ENCODE measurements at regions of chr1 and their contacts with region 1.

Region 1: GRCh38 chr1:47437447-47438164 is at the start of gene FOXD2:
- DNase-seq: peak; percentile 85
- H3K4me3 Mint-ChIP-seq: peak within 1 kb of the TSS; percentile 93
- H3K27ac Mint-ChIP-seq: peak within 1 kb of the TSS; percentile 91
- H3K4me1 Mint-ChIP-seq: peaks cover 34% of the 10 kb centered on the region
- H3K27me3 Mint-ChIP-seq: peaks cover 27% of the 10 kb centered on the region
- total RNA-seq, gene FOXD2: 0.15 to 0.20 TPM

Region 2: DNA sequence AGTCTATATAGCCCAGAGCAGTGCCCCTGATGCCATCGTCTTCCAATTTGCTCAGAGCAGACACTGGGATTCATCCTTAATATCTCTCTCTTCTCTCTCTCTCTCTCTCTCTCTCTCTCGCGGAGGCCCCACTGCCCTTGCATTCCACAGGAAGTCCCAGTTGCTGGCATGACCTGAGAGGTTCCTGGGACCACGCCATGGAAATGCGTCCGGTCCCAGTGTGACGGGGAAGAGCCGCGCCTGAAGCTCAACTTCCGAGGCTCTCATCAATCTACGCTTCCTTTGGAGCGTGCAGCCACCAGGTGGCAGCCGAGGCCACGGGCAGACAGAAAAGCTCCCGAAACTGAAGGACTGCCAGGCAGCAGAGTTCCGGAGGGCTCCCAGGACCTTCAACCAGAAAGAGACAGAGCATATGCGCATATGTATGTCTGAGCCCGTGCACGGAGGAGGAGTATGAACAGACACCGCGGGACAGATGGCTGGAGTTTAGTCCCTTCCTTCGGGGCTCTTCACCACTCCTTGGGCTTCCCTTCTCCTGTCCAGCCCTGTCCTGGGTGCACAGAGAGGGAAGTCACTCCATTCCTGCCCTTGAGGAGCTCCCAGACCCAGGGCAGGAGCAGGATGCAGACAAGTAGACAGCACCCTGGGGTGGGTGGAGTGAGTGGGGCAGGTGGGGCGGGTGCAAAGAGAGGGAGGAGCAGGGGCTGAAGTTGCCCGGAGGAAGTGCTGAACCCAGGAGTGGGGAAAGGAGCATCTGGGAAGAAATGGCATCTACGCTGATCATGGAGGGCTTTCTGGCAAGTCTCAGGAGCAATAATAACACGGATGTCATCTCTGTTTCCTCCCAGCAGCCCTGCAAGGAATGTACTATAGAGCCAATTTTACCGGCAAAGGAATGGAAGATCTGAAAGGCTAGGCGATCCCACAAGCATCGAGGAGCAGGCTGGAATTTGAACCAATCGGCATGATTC is 258.3 kb before region 1 on chr1:
- CTCF ChIA-PET with region 1: interaction called, 10 read pairs
- POLR2A ChIA-PET with region 1: no interaction called
- DNase-seq: peak; percentile 82
- H3K4me3 Mint-ChIP-seq: peak overlapping the region; percentile 71
- H3K27ac Mint-ChIP-seq: peak overlapping the region; percentile 87
- H3K4me1 Mint-ChIP-seq: peaks cover 8% of the 10 kb centered on the region
- H3K27me3 Mint-ChIP-seq: peaks cover 26% of the 10 kb centered on the region

Region 3: GRCh38 chr1:47418681-47419325 is 18.8 kb before region 1 on chr1:
- CTCF ChIA-PET with region 1: interaction called, 10 read pairs
- POLR2A ChIA-PET with region 1: no interaction called
- DNase-seq: no peak
- H3K4me3 Mint-ChIP-seq: no peak overlapping the region
- H3K27ac Mint-ChIP-seq: no peak overlapping the region
- H3K4me1 Mint-ChIP-seq: peaks cover 9% of the 10 kb centered on the region
- H3K27me3 Mint-ChIP-seq: peaks cover 71% of the 10 kb centered on the region

Region 4: DNA sequence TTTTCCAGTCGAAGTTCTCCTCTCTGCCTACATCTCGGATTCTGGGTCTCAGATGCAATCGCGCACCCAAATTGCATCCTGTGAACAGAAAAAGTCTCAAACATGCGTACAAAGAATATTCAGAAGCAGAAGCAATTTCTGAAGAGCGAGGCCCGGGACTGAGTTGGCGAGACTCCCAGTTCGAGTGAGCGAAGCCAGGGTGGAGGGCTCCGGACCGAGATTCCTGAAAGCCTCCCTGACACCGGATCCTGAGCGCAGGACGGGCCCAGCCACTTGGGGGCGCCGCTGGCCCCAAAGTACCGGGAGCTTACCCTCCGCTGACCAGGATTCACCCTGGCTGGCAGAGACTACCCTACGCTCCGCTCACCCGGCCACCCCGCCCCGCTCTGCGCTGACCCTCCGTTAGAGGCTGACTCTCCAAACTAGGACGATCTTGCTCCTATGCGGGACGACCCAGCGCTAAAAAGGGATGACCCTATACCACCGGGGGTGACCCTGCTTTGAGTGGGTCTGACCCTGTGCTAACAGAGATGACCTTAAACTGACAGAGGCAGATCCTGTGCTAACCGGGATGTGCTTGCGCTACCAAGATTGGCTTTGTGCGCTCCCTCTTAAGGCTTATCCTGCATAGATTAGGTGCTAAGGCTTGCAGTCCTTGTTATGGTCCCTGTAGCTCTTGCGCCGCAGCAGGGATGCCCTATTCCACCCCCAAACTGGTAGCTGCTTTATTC is 12.4 kb after region 1 on chr1:
- CTCF ChIA-PET with region 1: interaction called, 32 read pairs
- POLR2A ChIA-PET with region 1: no interaction called
- DNase-seq: no peak
- H3K4me3 Mint-ChIP-seq: no peak overlapping the region
- H3K27ac Mint-ChIP-seq: no peak overlapping the region
- H3K4me1 Mint-ChIP-seq: peaks cover 6% of the 10 kb centered on the region
- H3K27me3 Mint-ChIP-seq: peaks cover 40% of the 10 kb centered on the region

Region 5: GRCh38 chr1:47710329-47711071 is 272.9 kb after region 1 on chr1:
- CTCF ChIA-PET with region 1: interaction called, 36 read pairs
- POLR2A ChIA-PET with region 1: no interaction called
- DNase-seq: peak; percentile 64
- H3K4me3 Mint-ChIP-seq: no peak overlapping the region
- H3K27ac Mint-ChIP-seq: no peak overlapping the region
- H3K4me1 Mint-ChIP-seq: peaks cover 3% of the 10 kb centered on the region
- H3K27me3 Mint-ChIP-seq: peaks cover 74% of the 10 kb centered on the region

Region 6: GRCh38 chr1:47725992-47726855 is 288.6 kb after region 1 on chr1:
- CTCF ChIA-PET with region 1: interaction called, 10 read pairs
- POLR2A ChIA-PET with region 1: no interaction called
- DNase-seq: peak; percentile 70
- H3K4me3 Mint-ChIP-seq: no peak overlapping the region
- H3K27ac Mint-ChIP-seq: no peak overlapping the region
- H3K4me1 Mint-ChIP-seq: no peaks in the 10 kb centered on the region
- H3K27me3 Mint-ChIP-seq: peaks cover 37% of the 10 kb centered on the region